ENCODE measurements at regions of chr7 and their contacts with region 1.

Region 1: GRCh38 chr7:135662373-135663114 is at the start of gene STMP1:
- DNase-seq: peak; percentile 98
- H3K4me3 ChIP-seq: peak within 1 kb of the TSS; percentile 69 to 96 (median 79)
- H3K27ac ChIP-seq: peak within 1 kb of the TSS; percentile 89 to 96 (median 93)
- H3K4me1 ChIP-seq: peaks cover 0 to 36% (median 21%) of the 10 kb centered on the region in 4 donors
- H3K27me3 ChIP-seq: no peaks in the 10 kb centered on the region
- CTCF ChIP-seq: no peak
- EP300 ChIP-seq: no peak
- POLR2A ChIP-seq: peak; percentile 84 to 91
- total RNA-seq, gene STMP1: 10.2 to 25.0 (median 19.9) TPM

Region 2: GRCh38 chr7:135121868-135122267 is 540.7 kb before region 1 on chr7:
- intact Hi-C with region 1: no loop called
- DNase-seq: no peak
- H3K4me3 ChIP-seq: no peak overlapping the region
- H3K27ac ChIP-seq: no peak overlapping the region
- H3K4me1 ChIP-seq: no peaks in the 10 kb centered on the region
- H3K27me3 ChIP-seq: no peaks in the 10 kb centered on the region
- CTCF ChIP-seq: no peak
- EP300 ChIP-seq: no peak
- POLR2A ChIP-seq: no peak

Region 3: GRCh38 chr7:135745703-135746312 is 83.3 kb after region 1 on chr7:
- intact Hi-C with region 1: loop called (anchors 5 kb)
- DNase-seq: peak; percentile 90
- H3K4me3 ChIP-seq: no peak overlapping the region
- H3K27ac ChIP-seq: peak overlapping the region; percentile 41 to 55 (median 51)
- H3K4me1 ChIP-seq: peaks cover 0 to 41% (median 37%) of the 10 kb centered on the region in 4 donors
- H3K27me3 ChIP-seq: no peaks in the 10 kb centered on the region
- CTCF ChIP-seq: no peak
- EP300 ChIP-seq: no peak
- POLR2A ChIP-seq: no peak

Region 4: DNA sequence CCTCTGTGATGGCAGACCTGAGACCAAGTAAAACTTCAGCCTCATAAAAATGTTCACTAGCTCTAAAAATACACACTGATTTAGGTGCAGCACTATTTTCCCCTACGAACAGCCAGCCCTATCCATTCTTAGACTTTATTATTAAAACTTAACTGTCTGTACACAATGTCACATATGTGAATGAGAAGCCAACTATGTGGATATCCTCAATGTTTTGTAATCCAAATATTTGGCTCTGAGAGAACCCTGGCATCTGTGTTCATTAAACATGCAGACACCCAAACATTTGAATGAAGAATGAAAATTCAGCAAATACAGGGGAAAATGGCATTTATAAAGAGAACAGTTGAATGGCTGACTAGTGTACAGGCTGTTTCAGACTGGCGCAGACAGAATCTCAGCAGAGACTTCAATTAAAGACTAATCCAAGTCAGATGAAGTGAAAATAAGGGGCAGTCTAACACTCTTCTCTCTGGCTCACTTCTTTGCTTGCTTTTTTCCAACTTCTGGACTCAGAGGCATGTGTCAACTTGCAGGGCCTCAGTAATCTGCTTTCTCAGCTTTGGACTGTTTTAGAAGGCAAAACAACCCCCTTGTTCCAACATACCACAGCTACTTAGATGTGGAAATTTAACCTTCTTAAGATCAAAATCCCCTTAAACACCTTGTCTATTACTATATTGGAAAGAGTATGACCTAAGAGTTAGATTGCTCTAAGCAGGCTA is 133.5 kb after region 1 on chr7:
- intact Hi-C with region 1: loop called (anchors 5 kb)
- DNase-seq: no peak
- H3K4me3 ChIP-seq: no peak overlapping the region
- H3K27ac ChIP-seq: peak overlapping the region; percentile 53 to 79 (median 55)
- H3K4me1 ChIP-seq: peaks cover 0 to 39% (median 27%) of the 10 kb centered on the region in 4 donors
- H3K27me3 ChIP-seq: no peaks in the 10 kb centered on the region
- CTCF ChIP-seq: no peak
- EP300 ChIP-seq: no peak
- POLR2A ChIP-seq: no peak

Region 5: GRCh38 chr7:135977007-135977741 is 314.6 kb after region 1 on chr7 and contains the start of gene MTPN:
- intact Hi-C with region 1: loop called (anchors 10 kb)
- DNase-seq: peak; percentile 99
- H3K4me3 ChIP-seq: peak within 1 kb of the TSS; percentile 67 to 98 (median 86)
- H3K27ac ChIP-seq: peak within 1 kb of the TSS; percentile 81 to 93 (median 88)
- H3K4me1 ChIP-seq: peaks cover 0 to 40% (median 26%) of the 10 kb centered on the region in 4 donors
- H3K27me3 ChIP-seq: no peaks in the 10 kb centered on the region
- CTCF ChIP-seq: no peak
- EP300 ChIP-seq: peak in 1 of 4 donors; percentile 36
- POLR2A ChIP-seq: peak; percentile 57 to 62
- total RNA-seq, gene MTPN: 74.4 to 96.7 (median 78.4) TPM

Region 6: GRCh38 chr7:137592232-137592896 is 1929.8 kb after region 1 on chr7:
- intact Hi-C with region 1: loop called (anchors 5 kb)
- DNase-seq: peak; percentile 80
- H3K4me3 ChIP-seq: no peak overlapping the region
- H3K27ac ChIP-seq: peak overlapping the region in 3 of 4 donors; percentile 56 to 63 (median 57)
- H3K4me1 ChIP-seq: peaks cover 0 to 36% (median 32%) of the 10 kb centered on the region in 4 donors
- H3K27me3 ChIP-seq: no peaks in the 10 kb centered on the region
- CTCF ChIP-seq: peak; percentile 64 to 83 (median 72)
- EP300 ChIP-seq: no peak
- POLR2A ChIP-seq: no peak

Measured in sigmoid colon (tissue), 7 donors.